ENCODE measurements at regions of chr18 and their contacts with region 1.

Region 1: DNA sequence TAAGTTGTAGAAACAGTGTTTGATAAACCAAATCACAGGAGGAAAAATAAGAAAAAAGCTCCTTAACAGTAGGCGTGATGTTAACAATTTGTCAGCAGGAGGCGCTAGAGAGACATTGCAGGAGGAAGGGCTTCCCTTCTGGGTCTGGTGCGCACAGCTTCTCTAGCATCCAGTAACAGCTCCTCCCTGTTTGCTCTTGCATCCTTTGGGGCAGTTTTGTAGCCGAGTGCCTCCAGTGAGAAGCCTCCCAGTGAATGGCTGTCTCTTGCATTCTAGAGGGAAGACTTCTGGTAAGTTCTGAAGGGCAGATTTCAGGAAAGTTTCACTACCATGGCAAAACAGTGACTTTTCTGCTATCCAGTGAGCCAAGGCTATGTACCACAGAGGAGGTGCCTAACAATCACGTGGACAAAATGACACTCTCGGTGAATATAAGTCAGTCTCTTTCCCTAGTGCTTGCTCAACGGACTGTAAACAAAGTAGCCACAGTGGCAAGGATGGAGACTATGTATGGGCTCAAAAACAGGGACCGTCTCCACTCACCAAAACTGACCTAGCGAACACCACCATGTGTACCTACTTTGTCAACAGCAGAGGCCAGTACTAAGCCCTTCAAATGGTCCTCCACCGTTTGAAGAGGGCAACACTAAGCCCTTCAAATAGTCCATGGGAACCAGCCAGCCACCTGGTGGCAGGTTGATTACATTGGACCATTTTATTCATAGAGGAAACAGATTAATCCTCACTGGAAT is 9.6 kb upstream of the ZNF396 start:
- DNase-seq: no peak
- ATAC-seq: peak; percentile 90
- H3K4me3 ChIP-seq: no peak overlapping the region
- H3K27ac ChIP-seq: no peak overlapping the region
- H3K4me1 ChIP-seq: no peaks in the 10 kb centered on the region
- H3K27me3 ChIP-seq: 0 out of 4 replicates have a peak, but pooled peaks cover 0 to 3% of the 10 kb centered on the region in 2 experiments
- CTCF ChIP-seq: peak; percentile 88 to 92 (median 89)
- EP300 ChIP-seq: no peak
- POLR2A ChIP-seq: no peak
- RAD21 ChIP-seq: peak; percentile 85

Region 2: DNA sequence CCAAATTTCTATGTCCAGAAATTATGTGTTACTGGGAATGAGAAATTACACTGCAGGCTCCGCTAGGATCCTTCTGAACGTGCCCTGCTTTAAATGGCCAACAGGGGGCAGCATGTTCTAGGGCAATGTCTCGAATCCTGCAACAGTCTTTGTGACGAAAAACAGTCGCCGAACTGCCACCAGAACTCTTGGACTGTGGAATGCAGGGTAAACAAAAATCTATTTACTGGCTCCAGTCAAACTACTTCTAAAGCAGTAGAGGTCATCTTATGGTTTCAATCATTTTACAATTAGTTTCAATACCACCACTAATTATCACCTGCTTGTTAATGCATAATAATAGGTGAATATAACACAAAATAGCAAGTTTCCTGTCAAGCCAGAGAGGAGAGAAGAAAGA is 155.7 kb before region 1 on chr18:
- CTCF ChIA-PET with region 1: interaction called, 31 read pairs
- POLR2A ChIA-PET with region 1: no interaction called
- RAD21 ChIA-PET with region 1: interaction called, 14 read pairs
- SMC1A ChIA-PET with region 1: interaction called, 3 read pairs
- in situ Hi-C with region 1: no loop called
- intact Hi-C with region 1: loop called (anchors 1 kb)
- DNase-seq: peak; percentile 33
- ATAC-seq: peak; percentile 95
- H3K4me3 ChIP-seq: peak overlapping the region; percentile 37; the same call in 1 of the 2 replicates
- H3K27ac ChIP-seq: no peak overlapping the region
- H3K4me1 ChIP-seq: no peaks in the 10 kb centered on the region
- H3K27me3 ChIP-seq: no peaks in the 10 kb centered on the region
- CTCF ChIP-seq: peak; percentile 89 to 95 (median 89)
- EP300 ChIP-seq: no peak
- POLR2A ChIP-seq: no peak
- RAD21 ChIP-seq: peak; percentile 96

Region 3: GRCh38 chr18:35397976-35398375 is 11.2 kb after region 1 on chr18:
- CTCF ChIA-PET with region 1: interaction called, 13 read pairs
- POLR2A ChIA-PET with region 1: no interaction called
- RAD21 ChIA-PET with region 1: interaction called, 7 read pairs
- SMC1A ChIA-PET with region 1: interaction called, 38 read pairs
- in situ Hi-C with region 1: no loop called
- intact Hi-C with region 1: no loop called
- DNase-seq: no peak
- ATAC-seq: no peak
- H3K4me3 ChIP-seq: no peak overlapping the region
- H3K27ac ChIP-seq: no peak overlapping the region
- H3K4me1 ChIP-seq: no peaks in the 10 kb centered on the region
- H3K27me3 ChIP-seq: no peaks in the 10 kb centered on the region
- CTCF ChIP-seq: no peak
- EP300 ChIP-seq: no peak
- POLR2A ChIP-seq: no peak
- RAD21 ChIP-seq: no peak

Region 4: DNA sequence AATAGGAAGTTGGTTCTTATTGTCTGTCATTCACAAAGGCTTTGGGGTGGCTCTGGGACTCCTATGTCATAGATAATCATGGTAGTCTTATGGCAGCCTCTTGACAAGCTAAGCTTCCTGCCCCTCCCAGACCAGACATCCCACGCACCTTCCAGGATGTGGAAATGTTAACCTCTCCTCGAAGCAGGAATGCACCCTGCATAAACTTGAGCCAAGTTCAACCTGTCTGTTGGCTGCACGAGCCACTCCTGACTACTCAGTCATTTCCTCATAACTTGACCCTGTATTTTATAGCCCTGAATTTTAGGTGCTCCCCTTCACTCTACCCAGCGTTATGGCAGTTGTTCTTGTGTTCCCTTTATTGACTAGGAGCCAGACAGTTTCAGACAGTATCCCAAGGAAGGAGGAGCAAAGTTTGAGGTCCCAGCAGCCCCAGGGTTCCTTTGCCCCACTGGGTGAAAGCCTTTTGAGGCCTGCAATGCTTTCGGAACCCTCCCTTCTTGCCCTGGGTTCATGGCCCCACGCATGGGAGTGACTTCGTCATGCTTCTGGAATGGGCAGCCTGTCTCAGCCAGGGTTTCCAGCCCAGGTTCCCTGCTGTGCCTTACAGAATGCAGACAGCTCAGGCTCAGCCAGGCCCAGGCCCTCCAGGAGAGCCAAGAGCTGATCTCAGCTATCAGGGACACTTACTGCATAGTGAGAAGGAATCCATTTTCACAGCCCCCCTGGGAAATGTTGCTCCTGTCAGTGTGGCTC is 126.6 kb after region 1 on chr18:
- CTCF ChIA-PET with region 1: interaction called, 11 read pairs
- POLR2A ChIA-PET with region 1: no interaction called
- RAD21 ChIA-PET with region 1: interaction called, 12 read pairs
- SMC1A ChIA-PET with region 1: interaction called, 8 read pairs
- in situ Hi-C with region 1: no loop called
- intact Hi-C with region 1: no loop called
- DNase-seq: no peak
- ATAC-seq: no peak
- H3K4me3 ChIP-seq: no peak overlapping the region
- H3K27ac ChIP-seq: no peak overlapping the region
- H3K4me1 ChIP-seq: peaks cover 8% of the 10 kb centered on the region
- H3K27me3 ChIP-seq: no peaks in the 10 kb centered on the region
- CTCF ChIP-seq: no peak
- EP300 ChIP-seq: no peak
- POLR2A ChIP-seq: no peak
- RAD21 ChIP-seq: no peak

Region 5: DNA sequence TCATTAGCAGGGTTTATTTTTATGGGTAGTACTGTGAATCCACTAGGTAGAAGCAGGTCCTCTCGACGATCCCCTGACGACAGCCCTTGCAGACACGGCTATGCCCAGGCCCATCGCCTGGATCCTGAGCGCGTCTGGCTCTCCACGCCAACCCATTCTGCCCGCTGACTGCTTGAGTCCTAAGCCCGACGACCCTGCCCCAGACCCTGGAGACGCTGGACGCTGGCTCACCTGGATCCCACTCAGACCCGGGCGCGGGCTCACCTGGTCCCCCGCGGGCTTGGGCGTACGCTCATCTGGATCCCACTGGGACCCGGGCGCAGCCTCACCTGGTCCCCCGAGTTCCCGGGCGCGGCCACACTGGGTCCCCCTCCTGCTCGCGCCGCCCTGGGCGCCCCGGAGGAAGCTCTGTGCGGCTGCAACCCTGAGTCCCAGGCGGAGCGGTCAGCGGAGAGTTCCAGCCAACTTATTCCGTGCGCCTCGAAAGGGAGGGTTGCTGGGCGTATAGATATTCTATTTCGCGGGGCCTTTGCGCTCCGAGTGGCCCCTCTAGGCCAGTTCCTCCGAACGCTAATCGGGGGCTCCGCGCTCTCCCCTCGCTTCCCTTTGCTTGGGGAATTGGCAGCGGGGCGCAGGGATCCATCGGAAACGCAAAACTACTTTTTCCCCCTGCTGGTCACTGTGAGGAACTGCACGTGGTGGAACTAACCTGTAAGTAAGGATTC is 563.3 kb after region 1 on chr18:
- CTCF ChIA-PET with region 1: interaction called, 8 read pairs
- POLR2A ChIA-PET with region 1: interaction called, 7 read pairs
- RAD21 ChIA-PET with region 1: no interaction called
- SMC1A ChIA-PET with region 1: no interaction called
- in situ Hi-C with region 1: no loop called
- intact Hi-C with region 1: loop called (anchors 5 kb)
- DNase-seq: no peak
- ATAC-seq: peak; percentile 85
- H3K4me3 ChIP-seq: no peak overlapping the region
- H3K27ac ChIP-seq: no peak overlapping the region
- H3K4me1 ChIP-seq: no peaks in the 10 kb centered on the region
- H3K27me3 ChIP-seq: no peaks in the 10 kb centered on the region
- CTCF ChIP-seq: peak; percentile 82 to 91 (median 85)
- EP300 ChIP-seq: no peak
- POLR2A ChIP-seq: no peak
- RAD21 ChIP-seq: peak; percentile 73

Measured in GM12878 (cell line).